SK-N-SH (cell line): ENCODE measurements at regions of chr17 and their contacts with region 1.

Region 1: DNA sequence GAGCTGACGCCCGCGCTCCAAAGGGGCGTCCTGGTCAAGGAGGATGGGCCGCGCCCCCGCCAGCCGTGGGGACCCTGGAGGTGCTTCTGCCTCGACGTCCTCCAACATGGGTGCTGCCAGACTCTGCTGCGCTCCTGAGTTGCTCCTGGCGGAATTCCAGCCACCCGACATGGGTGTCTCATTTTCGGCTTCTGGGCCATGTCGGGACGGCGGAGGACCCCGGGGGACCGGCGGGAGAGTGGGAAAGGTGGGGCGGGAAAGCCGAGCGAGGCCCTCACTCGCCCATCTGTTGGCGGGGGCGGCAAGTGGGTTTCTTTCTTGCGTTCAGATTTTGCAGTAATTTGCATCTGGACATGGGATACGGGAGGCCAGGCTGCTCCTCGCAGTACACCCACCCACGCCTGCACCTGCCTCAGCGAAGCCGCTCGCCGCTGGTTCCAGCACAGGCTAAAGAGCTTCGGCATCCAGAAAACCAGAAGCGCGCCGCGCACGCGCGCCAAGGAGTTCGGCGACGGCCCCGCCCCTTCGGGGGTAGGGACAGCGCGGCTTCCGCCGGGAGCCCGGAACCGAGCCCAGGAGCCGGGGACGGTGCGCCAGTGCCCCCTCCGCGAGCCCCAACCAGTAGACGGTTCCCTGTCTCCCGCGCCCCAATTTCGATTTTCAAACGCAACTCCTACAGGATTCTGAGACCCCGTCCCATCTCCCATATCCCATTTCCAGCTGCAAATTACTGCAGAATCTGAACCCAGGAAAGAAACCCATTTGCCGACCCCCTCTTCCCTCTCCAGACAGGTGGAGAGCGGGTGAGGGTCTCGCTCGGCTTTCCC is at the start of gene ARMC7:
- DNase-seq: peak; percentile 100
- H3K4me3 ChIP-seq: peak within 1 kb of the TSS; percentile 67 to 75
- H3K27ac ChIP-seq: peak within 1 kb of the TSS in 1 of 2 experiments; percentile 60; a peak in 2 of 4 replicates
- H3K4me1 ChIP-seq: peaks cover 0 to 25% of the 10 kb centered on the region in 2 experiments; a peak in 1 of 4 replicates
- H3K27me3 ChIP-seq: no peaks in the 10 kb centered on the region
- CTCF ChIP-seq: no peak
- EP300 ChIP-seq: no peak
- RAD21 ChIP-seq: no peak
- polyA plus RNA-seq, gene ARMC7: 7.3 and 10.8 TPM in 2 replicates

Region 2: DNA sequence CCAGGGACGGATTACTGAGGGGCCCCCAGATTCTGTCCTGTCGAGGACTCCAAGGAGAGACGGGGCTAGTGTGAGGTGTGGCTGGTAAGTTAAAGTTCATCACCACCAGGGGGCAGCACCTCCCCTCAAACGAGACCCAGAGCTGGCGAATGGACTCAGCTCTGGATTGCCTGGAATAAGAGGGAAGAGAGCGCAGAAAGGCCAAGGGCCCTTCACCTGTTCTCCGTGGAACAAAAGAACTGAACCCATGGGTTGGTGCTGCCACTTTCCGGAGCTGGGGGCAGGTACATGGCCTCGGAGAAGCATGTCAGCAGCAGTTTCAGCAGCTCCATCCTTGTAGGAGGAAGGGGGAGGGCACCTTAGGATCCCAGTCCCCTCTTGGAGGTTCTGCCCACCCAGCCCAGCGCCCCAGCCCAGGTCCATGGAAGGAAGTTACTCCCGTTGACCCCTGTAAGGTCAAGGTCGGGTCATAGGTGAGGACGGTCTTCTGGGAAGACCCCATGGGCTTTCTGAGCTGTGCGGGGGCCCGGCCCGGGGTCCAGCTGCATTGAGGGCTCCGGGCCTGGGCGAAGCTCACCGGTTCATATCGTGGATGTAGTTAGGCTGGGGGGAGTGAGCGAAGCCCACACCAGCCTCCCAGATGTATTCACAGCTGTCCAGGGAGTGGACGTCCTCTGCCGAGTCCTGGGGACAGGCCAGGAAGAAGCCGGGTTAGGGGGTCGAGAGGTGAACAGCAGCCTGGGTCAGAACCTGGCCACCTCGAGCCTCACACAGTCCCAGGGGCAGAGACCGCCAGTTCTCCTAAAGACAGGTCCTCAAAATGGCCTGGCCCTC is 147.7 kb before region 1 on chr17:
- CTCF ChIA-PET with region 1: interaction called, 39 read pairs
- POLR2A ChIA-PET with region 1: interaction called, 3 read pairs
- DNase-seq: peak; percentile 96
- H3K4me3 ChIP-seq: no peak overlapping the region
- H3K27ac ChIP-seq: no peak overlapping the region; a peak in 1 of 4 replicates
- H3K4me1 ChIP-seq: no peaks in the 10 kb centered on the region; a peak in 1 of 4 replicates
- H3K27me3 ChIP-seq: no peaks in the 10 kb centered on the region
- CTCF ChIP-seq: peak; percentile 91
- EP300 ChIP-seq: no peak
- RAD21 ChIP-seq: peak; percentile 95

Region 3: DNA sequence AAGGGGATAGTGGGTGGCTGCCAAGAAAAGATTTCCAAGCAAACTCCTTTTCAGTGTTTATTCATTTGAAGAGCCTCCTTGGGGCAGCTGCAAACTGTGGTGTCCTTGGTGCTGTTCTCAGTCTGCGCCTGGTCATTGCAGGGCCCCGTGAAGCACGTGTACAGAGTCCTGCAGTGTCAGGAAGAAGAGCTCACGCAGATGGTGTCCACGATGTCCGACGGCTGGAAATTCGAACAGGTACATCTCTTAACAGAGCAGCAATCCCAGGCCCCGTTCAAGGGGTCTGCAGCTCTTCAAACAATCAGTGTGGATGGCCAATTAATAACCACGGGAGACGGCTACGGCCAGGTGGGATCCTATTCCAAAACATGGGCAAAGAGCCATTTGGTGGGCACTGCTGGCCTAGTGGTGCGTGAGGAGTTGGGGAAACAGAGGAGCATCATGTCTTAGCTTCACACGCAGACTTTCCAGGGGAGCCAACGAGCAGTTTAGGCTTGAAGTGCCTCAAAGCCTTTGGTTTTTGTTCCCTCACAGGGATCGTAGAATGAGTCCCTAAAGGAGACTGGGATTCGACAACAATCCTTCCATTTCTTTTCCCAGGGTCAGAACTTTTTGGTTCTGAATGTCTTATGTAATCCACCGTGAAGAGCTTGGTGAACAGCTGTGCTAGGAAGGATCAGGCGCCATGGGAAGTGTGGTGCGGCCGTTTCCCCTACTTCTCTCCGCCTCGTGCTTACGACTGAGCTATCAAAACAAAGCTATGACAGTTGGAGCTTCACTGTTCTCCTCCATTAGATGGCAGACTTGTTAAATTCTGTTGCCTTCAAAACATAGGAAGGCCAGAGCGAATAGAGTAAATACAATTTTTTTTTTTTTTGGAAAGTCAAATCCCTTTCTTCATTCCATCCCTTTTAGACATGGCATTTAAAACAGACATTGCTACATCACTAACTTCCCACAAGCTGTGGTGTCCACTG is 50.0 kb before region 1 on chr17:
- CTCF ChIA-PET with region 1: interaction called, 19 read pairs
- POLR2A ChIA-PET with region 1: no interaction called
- DNase-seq: peak; percentile 47
- H3K4me3 ChIP-seq: no peak overlapping the region
- H3K27ac ChIP-seq: no peak overlapping the region
- H3K4me1 ChIP-seq: no peaks in the 10 kb centered on the region
- H3K27me3 ChIP-seq: no peaks in the 10 kb centered on the region
- CTCF ChIP-seq: peak; percentile 57
- EP300 ChIP-seq: no peak
- RAD21 ChIP-seq: peak; percentile 55

Region 4: GRCh38 chr17:75096082-75096625 is 13.5 kb before region 1 on chr17:
- CTCF ChIA-PET with region 1: interaction called, 43 read pairs
- POLR2A ChIA-PET with region 1: no interaction called
- DNase-seq: no peak
- H3K4me3 ChIP-seq: no peak overlapping the region
- H3K27ac ChIP-seq: no peak overlapping the region
- H3K4me1 ChIP-seq: peaks cover 0 to 2% of the 10 kb centered on the region in 2 experiments; a peak in 1 of 4 replicates
- H3K27me3 ChIP-seq: no peaks in the 10 kb centered on the region
- CTCF ChIP-seq: no peak
- EP300 ChIP-seq: no peak; a peak in 1 of 4 replicates
- RAD21 ChIP-seq: no peak

Region 5: GRCh38 chr17:75173526-75173925 is 63.9 kb after region 1 on chr17:
- CTCF ChIA-PET with region 1: interaction called, 107 read pairs
- POLR2A ChIA-PET with region 1: no interaction called
- DNase-seq: no peak
- H3K4me3 ChIP-seq: no peak overlapping the region
- H3K27ac ChIP-seq: no peak overlapping the region
- H3K4me1 ChIP-seq: no peaks in the 10 kb centered on the region
- H3K27me3 ChIP-seq: no peaks in the 10 kb centered on the region
- CTCF ChIP-seq: no peak
- EP300 ChIP-seq: no peak
- RAD21 ChIP-seq: no peak

Region 6: DNA sequence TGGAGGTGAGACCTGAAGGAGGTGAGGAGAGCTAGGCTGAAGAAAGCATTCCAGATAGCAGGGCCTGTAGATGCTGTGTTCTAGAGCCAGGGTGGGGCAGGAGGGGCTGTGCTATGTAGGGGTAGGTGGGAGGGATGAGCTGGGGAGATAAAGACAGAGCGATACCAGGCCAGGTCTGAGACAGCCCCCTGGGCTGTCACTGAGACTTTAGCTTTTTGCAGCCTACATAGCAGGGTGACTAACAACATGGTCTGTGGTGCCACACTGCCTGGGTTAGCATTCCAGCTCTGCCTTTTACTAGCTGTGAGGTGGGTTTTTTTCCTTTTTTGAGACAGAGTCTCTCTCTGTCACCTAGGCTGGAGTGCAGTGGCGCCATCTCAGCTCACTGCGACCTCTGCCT is 110.2 kb after region 1 on chr17:
- CTCF ChIA-PET with region 1: interaction called, 12 read pairs
- POLR2A ChIA-PET with region 1: no interaction called
- DNase-seq: no peak
- H3K4me3 ChIP-seq: no peak overlapping the region
- H3K27ac ChIP-seq: no peak overlapping the region
- H3K4me1 ChIP-seq: no peaks in the 10 kb centered on the region
- H3K27me3 ChIP-seq: no peaks in the 10 kb centered on the region
- CTCF ChIP-seq: no peak
- EP300 ChIP-seq: no peak
- RAD21 ChIP-seq: no peak

Region 7: DNA sequence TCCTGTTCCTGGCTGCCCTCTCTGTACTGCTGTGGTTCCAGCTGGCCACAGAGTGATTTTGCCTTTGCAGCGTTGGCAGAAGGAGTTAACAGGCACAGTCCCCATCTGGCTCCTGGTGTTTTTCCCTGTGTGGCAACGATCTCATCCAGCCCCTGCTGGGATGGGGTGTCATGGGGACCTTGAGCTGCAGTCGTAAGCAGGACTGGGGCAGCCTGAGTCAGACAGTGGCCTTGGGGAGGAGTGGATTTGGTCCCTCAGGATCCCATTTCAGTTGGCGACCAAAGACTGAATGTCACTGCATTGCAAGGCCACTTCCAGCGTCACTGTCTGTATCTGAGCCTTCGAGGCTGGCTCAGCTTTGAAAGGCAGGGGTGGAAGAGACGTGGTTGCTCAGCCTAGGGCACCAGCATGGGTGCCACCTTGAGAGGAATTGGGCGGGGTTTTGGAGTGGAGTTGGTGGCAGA is 358.7 kb after region 1 on chr17:
- CTCF ChIA-PET with region 1: no interaction called
- POLR2A ChIA-PET with region 1: no interaction called
- DNase-seq: no peak
- H3K4me3 ChIP-seq: no peak overlapping the region
- H3K27ac ChIP-seq: no peak overlapping the region
- H3K4me1 ChIP-seq: no peaks in the 10 kb centered on the region
- H3K27me3 ChIP-seq: no peaks in the 10 kb centered on the region
- CTCF ChIP-seq: no peak
- EP300 ChIP-seq: no peak
- RAD21 ChIP-seq: no peak